Activated CD4-positive, alpha-beta memory T cell treated with anti-CD3 and anti-CD28 coated beads for 36 hours (primary cell): ENCODE measurements at regions of chr12 and their contacts with region 1.

Region 1: GRCh38 chr12:25320123-25321006 is 69.6 kb upstream of the KRAS start:
- DNase-seq: peak; percentile 25
- H3K4me3 Mint-ChIP-seq: no peak overlapping the region
- H3K27ac Mint-ChIP-seq: peak overlapping the region; percentile 53
- H3K4me1 Mint-ChIP-seq: peaks cover 48% of the 10 kb centered on the region
- H3K27me3 Mint-ChIP-seq: no peaks in the 10 kb centered on the region

Region 2: GRCh38 chr12:24822121-24822899 is 498.1 kb before region 1 on chr12:
- CTCF ChIA-PET with region 1: no interaction called
- POLR2A ChIA-PET with region 1: no interaction called
- intact Hi-C with region 1: loop called (anchors 1 kb)
- DNase-seq: no peak
- H3K4me3 Mint-ChIP-seq: no peak overlapping the region
- H3K27ac Mint-ChIP-seq: peak overlapping the region; percentile 50
- H3K4me1 Mint-ChIP-seq: peaks cover 30% of the 10 kb centered on the region
- H3K27me3 Mint-ChIP-seq: no peaks in the 10 kb centered on the region

Region 3: DNA sequence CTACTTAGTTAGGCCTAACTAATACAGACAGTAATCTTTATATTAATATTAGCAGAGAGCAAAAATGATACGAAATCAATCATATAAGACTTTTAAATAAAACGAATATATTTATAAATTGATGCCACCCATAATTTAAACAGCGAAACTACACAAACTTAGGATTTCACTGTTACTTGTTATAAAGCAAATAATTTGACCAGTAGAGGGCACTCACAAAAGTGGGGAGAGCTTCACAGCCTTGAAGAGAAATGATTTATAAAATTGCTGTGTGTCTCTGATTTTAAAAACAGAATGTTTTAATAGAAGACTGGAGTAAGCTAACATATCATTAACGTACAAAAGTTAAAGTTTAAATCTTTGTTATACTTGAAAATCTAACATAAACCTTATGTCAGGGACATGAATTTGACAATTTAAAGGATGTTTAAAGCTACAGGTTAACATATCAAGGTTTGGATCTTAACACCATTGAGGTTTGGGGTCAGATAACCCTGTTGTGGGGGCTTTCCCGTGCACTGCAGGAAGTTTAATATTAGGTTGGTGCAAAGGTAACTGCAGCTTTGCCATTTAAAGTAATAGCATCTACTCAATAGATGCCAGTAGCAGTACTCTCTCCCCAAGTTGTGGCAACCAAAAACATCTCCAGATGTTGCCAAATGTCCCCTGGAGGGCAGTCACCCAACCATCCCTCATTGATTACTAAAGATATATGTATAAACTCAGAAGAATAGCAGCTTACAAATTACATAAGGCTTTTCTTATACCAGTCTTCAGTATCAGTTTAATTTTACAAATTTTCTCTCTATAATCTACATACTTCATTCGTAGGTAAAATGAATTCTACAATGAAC is 79.0 kb before region 1 on chr12:
- CTCF ChIA-PET with region 1: interaction called, 12 read pairs
- POLR2A ChIA-PET with region 1: no interaction called
- intact Hi-C with region 1: no loop called
- DNase-seq: no peak
- H3K4me3 Mint-ChIP-seq: no peak overlapping the region
- H3K27ac Mint-ChIP-seq: no peak overlapping the region
- H3K4me1 Mint-ChIP-seq: peaks cover 26% of the 10 kb centered on the region
- H3K27me3 Mint-ChIP-seq: no peaks in the 10 kb centered on the region

Region 4: GRCh38 chr12:25276199-25276937 is 44.0 kb before region 1 on chr12:
- CTCF ChIA-PET with region 1: no interaction called
- POLR2A ChIA-PET with region 1: interaction called, 3 read pairs
- intact Hi-C with region 1: loop called (anchors 2 kb)
- DNase-seq: peak; percentile 89
- H3K4me3 Mint-ChIP-seq: no peak overlapping the region
- H3K27ac Mint-ChIP-seq: peak overlapping the region; percentile 42
- H3K4me1 Mint-ChIP-seq: peaks cover 24% of the 10 kb centered on the region
- H3K27me3 Mint-ChIP-seq: no peaks in the 10 kb centered on the region

Region 5: DNA sequence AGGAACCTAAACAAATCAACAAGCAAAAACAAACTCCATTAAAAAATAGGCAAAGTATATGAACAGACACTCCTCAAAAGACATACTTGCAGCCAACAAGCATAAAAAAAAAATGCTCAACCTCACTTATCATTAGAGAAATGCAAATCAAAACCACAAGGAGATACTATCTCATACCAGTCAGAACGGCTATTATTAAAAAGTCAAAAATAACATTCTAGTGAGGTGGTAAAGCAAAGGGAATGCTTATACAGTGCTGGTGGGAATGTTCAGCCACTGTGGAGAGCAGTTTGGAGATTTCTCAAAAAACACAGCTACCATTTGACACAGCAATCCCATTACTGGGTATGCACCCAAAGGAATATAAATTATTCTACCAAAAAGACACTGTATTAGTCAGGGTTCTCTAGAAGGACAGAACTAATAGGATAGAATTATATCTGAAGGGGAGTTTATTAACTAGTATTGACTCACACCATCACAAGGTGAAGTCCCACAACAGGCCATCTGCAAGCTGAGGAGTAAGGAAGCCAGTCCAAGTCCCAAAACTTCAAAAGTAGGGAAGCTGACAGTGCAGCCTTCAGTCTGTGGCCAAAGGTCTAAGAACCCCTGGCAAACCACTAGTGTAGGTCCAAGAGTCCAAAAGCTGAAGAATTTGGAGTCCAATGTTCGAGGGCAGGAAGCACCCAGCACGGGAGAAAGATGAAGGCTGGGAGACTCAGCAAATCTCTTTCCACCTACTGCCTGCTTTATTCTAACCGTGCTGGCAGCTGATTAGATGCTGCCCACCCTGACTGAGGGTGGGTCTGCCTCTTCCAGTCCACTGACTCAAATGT is 31.9 kb after region 1 on chr12:
- CTCF ChIA-PET with region 1: no interaction called
- POLR2A ChIA-PET with region 1: no interaction called
- intact Hi-C with region 1: no loop called
- DNase-seq: no peak
- H3K4me3 Mint-ChIP-seq: no peak overlapping the region
- H3K27ac Mint-ChIP-seq: no peak overlapping the region
- H3K4me1 Mint-ChIP-seq: peaks cover 11% of the 10 kb centered on the region
- H3K27me3 Mint-ChIP-seq: no peaks in the 10 kb centered on the region

Region 6: GRCh38 chr12:25377469-25378177 is 57.3 kb after region 1 on chr12:
- CTCF ChIA-PET with region 1: no interaction called
- POLR2A ChIA-PET with region 1: no interaction called
- intact Hi-C with region 1: loop called (anchors 1 kb)
- DNase-seq: peak; percentile 60
- H3K4me3 Mint-ChIP-seq: peak overlapping the region; percentile 25
- H3K27ac Mint-ChIP-seq: peak overlapping the region; percentile 60
- H3K4me1 Mint-ChIP-seq: peaks cover 54% of the 10 kb centered on the region
- H3K27me3 Mint-ChIP-seq: no peaks in the 10 kb centered on the region